HCT116 (cell line): ENCODE measurements at regions of chr10 and their contacts with region 1.

Region 1: DNA sequence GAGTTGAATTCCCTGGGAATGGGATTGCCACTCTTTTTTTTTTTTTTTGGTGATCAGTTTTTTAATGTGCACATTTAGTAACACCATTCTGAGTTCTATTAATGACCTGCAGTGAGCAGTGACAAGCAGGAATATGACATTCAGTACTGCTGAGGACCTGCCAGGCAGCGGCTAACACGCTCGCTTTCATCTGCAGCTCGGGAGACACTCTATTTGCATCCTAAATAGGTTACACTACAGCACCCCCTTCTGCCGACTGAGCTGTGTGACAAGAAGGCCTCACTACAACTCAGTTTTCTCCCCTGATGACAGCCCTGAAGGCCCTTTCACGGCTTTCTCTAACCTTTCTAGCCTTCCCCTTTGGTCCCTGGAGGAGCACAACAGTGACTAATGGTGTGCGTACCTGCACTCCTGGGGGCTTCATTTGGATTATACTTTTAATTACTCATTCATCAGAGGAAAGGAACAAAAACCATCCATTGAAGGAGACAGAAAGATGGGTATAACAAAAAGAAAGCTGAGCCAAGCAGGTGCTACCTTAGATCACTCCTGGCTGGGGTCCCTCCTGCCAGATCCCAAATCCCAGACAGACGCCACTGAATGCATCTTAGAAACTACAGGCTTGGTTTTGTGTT is 872.4 kb downstream of the LRMDA start:
- DNase-seq: peak; percentile 28
- ATAC-seq: peak; percentile 92
- H3K4me3 ChIP-seq: no peak overlapping the region
- H3K27ac ChIP-seq: no peak overlapping the region
- H3K4me1 ChIP-seq: no peaks in the 10 kb centered on the region
- H3K27me3 ChIP-seq: peaks cover 14% of the 10 kb centered on the region; the same call in 1 of the 2 replicates
- CTCF ChIP-seq: peak; percentile 29 to 55 (median 45); a peak in 4 of 6 replicates
- POLR2A ChIP-seq: no peak
- RAD21 ChIP-seq: peak; percentile 69

Region 2: DNA sequence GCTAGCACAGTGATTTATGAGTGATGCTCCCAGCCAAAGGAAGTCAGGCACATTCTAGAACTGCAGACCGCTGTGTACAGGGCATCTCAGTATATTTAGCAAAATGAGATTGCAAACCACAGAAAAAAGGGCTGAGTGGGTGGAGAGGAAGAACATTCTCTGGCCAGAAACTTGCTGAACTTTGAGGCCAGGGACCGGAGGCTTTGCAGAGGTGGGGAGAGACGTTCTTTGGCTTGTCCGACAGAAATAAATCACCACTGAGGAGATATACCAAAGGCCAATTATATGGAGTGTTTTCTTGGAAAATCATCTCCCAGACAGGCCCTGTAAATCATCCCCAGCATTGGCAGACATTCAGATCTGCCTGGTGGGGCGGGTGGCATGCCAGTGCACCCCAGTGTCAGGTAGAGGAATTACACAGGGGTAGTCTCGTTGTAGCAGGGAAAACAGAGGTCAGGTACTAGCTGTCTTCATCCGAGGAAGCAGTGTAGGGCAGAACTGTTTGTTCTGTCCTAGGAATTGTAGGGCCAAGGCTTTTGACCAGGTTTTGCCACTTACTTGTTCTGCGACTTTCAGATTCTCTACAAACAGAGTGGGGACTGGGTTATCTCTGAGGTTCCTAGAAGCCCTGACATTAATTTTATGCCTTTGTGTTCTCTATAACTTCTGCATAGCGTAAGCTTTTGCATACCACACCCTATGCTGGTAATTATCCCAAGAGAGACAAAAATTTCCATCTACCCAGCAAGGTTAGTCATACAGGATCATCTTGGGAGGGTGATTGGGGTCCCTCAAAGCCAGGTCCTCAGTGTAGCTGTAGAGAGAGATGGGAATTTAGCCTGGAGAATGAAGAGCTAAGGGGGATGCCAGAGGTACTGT is 216.8 kb before region 1 on chr10:
- CTCF ChIA-PET with region 1: interaction called, 10 read pairs
- POLR2A ChIA-PET with region 1: no interaction called
- RAD21 ChIA-PET with region 1: no interaction called
- intact Hi-C with region 1: no loop called
- DNase-seq: no peak
- ATAC-seq: peak; percentile 83
- H3K4me3 ChIP-seq: no peak overlapping the region
- H3K27ac ChIP-seq: no peak overlapping the region
- H3K4me1 ChIP-seq: peaks cover 16 to 31% of the 10 kb centered on the region in 2 experiments
- H3K27me3 ChIP-seq: peaks cover 9% of the 10 kb centered on the region
- CTCF ChIP-seq: peak; percentile 58 to 82 (median 81); a peak in 5 of 6 replicates
- POLR2A ChIP-seq: no peak
- RAD21 ChIP-seq: peak; percentile 86

Region 3: GRCh38 chr10:76257816-76258215 is 46.0 kb before region 1 on chr10:
- CTCF ChIA-PET with region 1: no interaction called
- POLR2A ChIA-PET with region 1: no interaction called
- RAD21 ChIA-PET with region 1: no interaction called
- intact Hi-C with region 1: no loop called
- DNase-seq: no peak
- ATAC-seq: no peak
- H3K4me3 ChIP-seq: no peak overlapping the region
- H3K27ac ChIP-seq: no peak overlapping the region
- H3K4me1 ChIP-seq: no peaks in the 10 kb centered on the region
- H3K27me3 ChIP-seq: no peaks in the 10 kb centered on the region; the same call in 1 of the 2 replicates
- CTCF ChIP-seq: no peak
- POLR2A ChIP-seq: no peak
- RAD21 ChIP-seq: no peak

Region 4: DNA sequence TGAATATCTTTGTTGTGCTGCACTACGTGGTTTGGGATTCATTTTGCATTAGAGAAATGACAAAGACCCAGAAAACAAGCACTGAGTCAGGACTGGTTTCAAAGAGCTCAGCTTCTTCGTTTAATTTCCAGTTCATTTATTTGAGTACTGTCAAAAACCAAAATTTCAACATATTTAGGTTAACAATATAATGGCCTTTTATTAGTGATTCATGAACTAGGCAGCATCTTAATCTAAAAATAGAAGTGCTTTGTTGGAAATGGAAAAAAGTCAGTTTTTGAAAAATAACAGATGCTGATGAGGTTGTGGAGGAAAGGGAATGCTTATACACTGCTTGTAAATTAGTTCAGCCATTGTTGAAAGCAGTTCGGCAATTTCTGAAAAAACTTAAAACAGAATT is 15.9 kb before region 1 on chr10:
- CTCF ChIA-PET with region 1: no interaction called
- POLR2A ChIA-PET with region 1: no interaction called
- RAD21 ChIA-PET with region 1: no interaction called
- intact Hi-C with region 1: no loop called
- DNase-seq: no peak
- ATAC-seq: no peak
- H3K4me3 ChIP-seq: no peak overlapping the region
- H3K27ac ChIP-seq: no peak overlapping the region
- H3K4me1 ChIP-seq: no peaks in the 10 kb centered on the region
- H3K27me3 ChIP-seq: no peaks in the 10 kb centered on the region
- CTCF ChIP-seq: no peak
- POLR2A ChIP-seq: no peak
- RAD21 ChIP-seq: no peak

Region 5: DNA sequence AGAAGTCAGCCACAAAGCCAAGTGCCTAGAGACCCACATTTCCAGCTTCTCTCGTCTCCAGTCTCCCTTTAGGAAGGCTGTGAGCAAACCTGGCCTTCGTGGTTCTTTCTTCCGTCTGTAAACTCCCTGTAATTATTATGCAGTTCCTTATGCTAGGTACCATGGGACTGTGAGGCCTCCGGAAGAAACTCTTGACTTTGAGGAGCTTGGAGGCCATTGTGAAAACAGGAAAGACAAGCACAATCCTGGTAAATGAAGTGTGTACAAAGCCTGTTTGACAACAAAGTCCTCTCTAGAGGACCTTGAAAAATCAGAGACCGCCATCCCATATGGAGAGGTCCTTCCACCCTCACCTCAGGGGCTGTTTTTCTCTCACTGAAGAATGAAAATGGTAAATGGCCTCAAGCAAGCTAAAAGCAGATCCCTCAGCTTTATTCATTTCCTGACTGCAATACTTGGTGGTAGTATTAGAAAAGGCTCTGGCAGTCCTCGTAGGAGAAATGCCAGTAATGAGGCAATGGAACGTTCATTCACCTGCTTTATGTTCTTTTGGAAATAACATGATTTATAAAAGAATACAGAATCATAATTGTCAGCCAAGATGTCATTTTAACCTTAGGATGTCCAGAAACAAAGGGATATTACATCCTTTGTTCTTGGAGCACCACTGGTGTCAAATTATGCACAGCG is 54.1 kb after region 1 on chr10:
- CTCF ChIA-PET with region 1: no interaction called
- POLR2A ChIA-PET with region 1: no interaction called
- RAD21 ChIA-PET with region 1: no interaction called
- intact Hi-C with region 1: no loop called
- DNase-seq: no peak
- ATAC-seq: no peak
- H3K4me3 ChIP-seq: no peak overlapping the region
- H3K27ac ChIP-seq: no peak overlapping the region
- H3K4me1 ChIP-seq: peaks cover 0 to under 1% of the 10 kb centered on the region in 2 experiments; a peak in 1 of 4 replicates
- H3K27me3 ChIP-seq: peaks cover 6% of the 10 kb centered on the region; the same call in 1 of the 2 replicates
- CTCF ChIP-seq: no peak
- POLR2A ChIP-seq: no peak
- RAD21 ChIP-seq: no peak